A549 (cell line): ENCODE measurements at regions of chrX and their contacts with region 1.

Region 1: GRCh38 chrX:46912098-46912602 is at the start of gene JADE3:
- DNase-seq: peak; percentile 61 to 82
- ATAC-seq: peak; percentile 91 to 92
- H3K4me3 ChIP-seq: peak within 1 kb of the TSS; percentile 96
- H3K27ac ChIP-seq: peak within 1 kb of the TSS; percentile 88 to 96
- H3K4me1 ChIP-seq: peaks cover 8% of the 10 kb centered on the region
- CTCF ChIP-seq: no peak
- EP300 ChIP-seq: no peak
- POLR2A ChIP-seq: peak; percentile 45
- RAD21 ChIP-seq: no peak
- polyA plus RNA-seq, gene JADE3: 19.8 and 28.8 TPM in 2 replicates

Region 2: DNA sequence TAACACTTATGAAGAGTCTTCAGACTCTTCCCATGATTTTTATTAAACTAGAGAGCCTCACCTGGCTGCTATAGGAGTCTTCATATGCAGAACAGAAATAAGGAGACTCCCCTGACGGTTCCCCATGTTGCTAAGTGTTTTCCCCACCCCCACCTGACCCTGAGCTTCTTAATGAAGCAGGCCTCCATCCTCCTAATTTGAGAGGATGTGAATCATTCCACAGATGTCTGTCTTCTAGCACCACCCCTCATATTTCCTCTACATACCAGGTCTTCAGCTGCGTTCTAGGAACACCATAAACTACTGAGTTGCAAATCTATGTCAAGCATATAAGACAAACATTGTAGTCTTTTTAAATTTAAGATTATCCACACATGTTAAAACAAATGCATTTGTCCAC is 38.4 kb before region 1 on chrX:
- CTCF ChIA-PET with region 1: no interaction called
- POLR2A ChIA-PET with region 1: no interaction called
- DNase-seq: no peak
- ATAC-seq: no peak
- H3K4me3 ChIP-seq: no peak overlapping the region
- H3K27ac ChIP-seq: no peak overlapping the region
- H3K4me1 ChIP-seq: peaks cover 8% of the 10 kb centered on the region
- CTCF ChIP-seq: no peak
- EP300 ChIP-seq: no peak
- POLR2A ChIP-seq: no peak
- RAD21 ChIP-seq: no peak

Region 3: GRCh38 chrX:46929439-46930261 is 17.5 kb after region 1 on chrX:
- CTCF ChIA-PET with region 1: interaction called, 15 read pairs
- POLR2A ChIA-PET with region 1: no interaction called
- DNase-seq: peak in 1 of 2 experiments; percentile 11
- ATAC-seq: peak; percentile 56 to 82; a peak in 4 of 6 replicates
- H3K4me3 ChIP-seq: no peak overlapping the region
- H3K27ac ChIP-seq: peak overlapping the region in 1 of 2 experiments; percentile 36; a peak in 1 of 6 replicates
- H3K4me1 ChIP-seq: peaks cover 6% of the 10 kb centered on the region
- CTCF ChIP-seq: no peak
- EP300 ChIP-seq: no peak
- POLR2A ChIP-seq: no peak
- RAD21 ChIP-seq: no peak

Region 4: GRCh38 chrX:46978341-46979291 is 66.5 kb after region 1 on chrX:
- CTCF ChIA-PET with region 1: interaction called, 13 read pairs
- POLR2A ChIA-PET with region 1: no interaction called
- DNase-seq: peak; percentile 51 to 89
- ATAC-seq: peak; percentile 90 to 95
- H3K4me3 ChIP-seq: 0 out of 3 replicates have a peak overlapping the region, but pooled peaks have one; percentile 21
- H3K27ac ChIP-seq: peak overlapping the region; percentile 81 to 86
- H3K4me1 ChIP-seq: peaks cover 24% of the 10 kb centered on the region
- CTCF ChIP-seq: peak; percentile 65
- EP300 ChIP-seq: no peak
- POLR2A ChIP-seq: no peak
- RAD21 ChIP-seq: peak; percentile 63 to 69

Region 5: DNA sequence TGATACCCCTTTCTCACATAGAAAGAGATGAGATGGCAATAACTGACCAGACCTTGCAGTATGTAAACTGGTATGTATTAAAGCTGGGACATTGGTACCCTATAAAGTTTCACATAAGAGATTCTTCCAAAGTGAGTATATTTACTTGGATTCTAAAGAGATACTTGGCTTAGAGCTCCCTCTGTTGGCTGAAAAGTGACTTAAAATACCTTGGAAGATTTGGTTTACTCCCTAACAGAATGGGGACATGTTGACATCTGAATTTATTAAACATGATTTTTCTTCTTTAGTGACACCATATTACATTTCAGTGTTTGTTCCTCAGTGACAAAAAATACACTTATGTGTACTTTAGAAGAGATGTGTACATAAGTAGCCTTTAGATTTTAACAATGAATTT is 118.2 kb after region 1 on chrX:
- CTCF ChIA-PET with region 1: interaction called, 17 read pairs
- POLR2A ChIA-PET with region 1: no interaction called
- DNase-seq: peak; percentile 46 to 71
- ATAC-seq: peak in 1 of 2 experiments; percentile 71; a peak in 4 of 6 replicates
- H3K4me3 ChIP-seq: no peak overlapping the region
- H3K27ac ChIP-seq: no peak overlapping the region
- H3K4me1 ChIP-seq: no peaks in the 10 kb centered on the region
- CTCF ChIP-seq: peak; percentile 71
- EP300 ChIP-seq: no peak
- POLR2A ChIP-seq: no peak
- RAD21 ChIP-seq: peak; percentile 78 to 80